ENCODE measurements at regions of chr9 and their contacts with region 1.

Region 1: GRCh38 chr9:29475471-29475870 is 1902.2 kb upstream of the C9orf72 start:
- DNase-seq: no peak
- ATAC-seq: no peak
- H3K4me3 ChIP-seq: no peak overlapping the region
- H3K27ac ChIP-seq: no peak overlapping the region
- H3K4me1 ChIP-seq: no peaks in the 10 kb centered on the region
- H3K27me3 ChIP-seq: no peaks in the 10 kb centered on the region
- CTCF ChIP-seq: no peak

Region 2: DNA sequence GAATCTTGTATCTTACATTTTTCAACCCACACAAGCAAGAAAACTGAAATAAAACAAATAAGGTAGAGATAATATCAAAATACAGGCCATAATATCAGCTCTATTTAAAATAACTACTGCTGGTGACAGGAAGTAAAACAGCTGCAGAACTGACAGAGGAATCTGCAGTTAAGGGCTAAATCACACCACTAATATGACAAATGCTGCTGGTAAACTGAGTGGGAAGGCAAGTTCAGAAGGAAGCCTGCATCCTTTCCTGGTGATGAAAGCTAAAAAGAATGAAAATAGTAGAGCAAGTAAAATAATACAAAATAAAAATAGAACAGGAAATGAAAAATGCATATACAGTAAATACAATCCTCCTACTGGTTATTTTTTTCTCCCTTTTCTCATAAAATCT is 608.5 kb before region 1 on chr9:
- intact Hi-C with region 1: no loop called
- DNase-seq: no peak
- ATAC-seq: no peak
- H3K4me3 ChIP-seq: no peak overlapping the region
- H3K27ac ChIP-seq: no peak overlapping the region
- H3K4me1 ChIP-seq: no peaks in the 10 kb centered on the region
- H3K27me3 ChIP-seq: no peaks in the 10 kb centered on the region
- CTCF ChIP-seq: no peak

Region 3: GRCh38 chr9:29548436-29548835 is 73.0 kb after region 1 on chr9:
- intact Hi-C with region 1: loop called in 1 of 10 experiments (anchors 10 kb)
- DNase-seq: no peak
- ATAC-seq: no peak
- H3K4me3 ChIP-seq: no peak overlapping the region
- H3K27ac ChIP-seq: no peak overlapping the region
- H3K4me1 ChIP-seq: no peaks in the 10 kb centered on the region
- H3K27me3 ChIP-seq: no peaks in the 10 kb centered on the region
- CTCF ChIP-seq: no peak

Region 4: GRCh38 chr9:29588361-29588760 is 112.9 kb after region 1 on chr9:
- intact Hi-C with region 1: no loop called
- DNase-seq: no peak
- ATAC-seq: no peak
- H3K4me3 ChIP-seq: no peak overlapping the region
- H3K27ac ChIP-seq: no peak overlapping the region
- H3K4me1 ChIP-seq: no peaks in the 10 kb centered on the region
- H3K27me3 ChIP-seq: no peaks in the 10 kb centered on the region
- CTCF ChIP-seq: no peak

Region 5: DNA sequence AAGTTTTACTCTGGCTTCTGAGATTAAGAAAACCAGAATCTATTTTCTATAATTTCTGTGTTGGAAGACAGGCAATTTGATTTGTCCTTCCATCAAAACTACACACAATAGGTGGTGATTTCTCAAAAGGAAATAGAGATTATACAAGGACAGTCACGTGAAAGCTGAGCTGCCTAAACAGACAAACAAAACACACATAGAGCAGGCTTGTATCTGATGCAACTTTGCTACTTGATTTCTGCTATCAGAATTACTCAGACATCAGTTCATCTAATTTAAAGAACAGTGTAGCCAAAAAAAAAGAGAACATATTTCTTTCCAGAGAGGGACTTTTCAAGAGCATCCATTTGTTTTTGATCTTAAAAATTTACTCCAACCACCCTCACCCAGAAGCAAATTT is 226.1 kb after region 1 on chr9:
- intact Hi-C with region 1: no loop called
- DNase-seq: no peak
- ATAC-seq: no peak
- H3K4me3 ChIP-seq: no peak overlapping the region
- H3K27ac ChIP-seq: no peak overlapping the region
- H3K4me1 ChIP-seq: no peaks in the 10 kb centered on the region
- H3K27me3 ChIP-seq: no peaks in the 10 kb centered on the region
- CTCF ChIP-seq: no peak

Region 6: GRCh38 chr9:29838491-29839022 is 363.1 kb after region 1 on chr9:
- intact Hi-C with region 1: no loop called
- DNase-seq: no peak
- ATAC-seq: no peak
- H3K4me3 ChIP-seq: no peak overlapping the region
- H3K27ac ChIP-seq: no peak overlapping the region
- H3K4me1 ChIP-seq: no peaks in the 10 kb centered on the region
- H3K27me3 ChIP-seq: no peaks in the 10 kb centered on the region
- CTCF ChIP-seq: no peak

Measured in heart right ventricle (tissue), 16 donors.